HCT116 (cell line): ENCODE measurements at regions of chr1 and their contacts with region 1.

Region 1: DNA sequence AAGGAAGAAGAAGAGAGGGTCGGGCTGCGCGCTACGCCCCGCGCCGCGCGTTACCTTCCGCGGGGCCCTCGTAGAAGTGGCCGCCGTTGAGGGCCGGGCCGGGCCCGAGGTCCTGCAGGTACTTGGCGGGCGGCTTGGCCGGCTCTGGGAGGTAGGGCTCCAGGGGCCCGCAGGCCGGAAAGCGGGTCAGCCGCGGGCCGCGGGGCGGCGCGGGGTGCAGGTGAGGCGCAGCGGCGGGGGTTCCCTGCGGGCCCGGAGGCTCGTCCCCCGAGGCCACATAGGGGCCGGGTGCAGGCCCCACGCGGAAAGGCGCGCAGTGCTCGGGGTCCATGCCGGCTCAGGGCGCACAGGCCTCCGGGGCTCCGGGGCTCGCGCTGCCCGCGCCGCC is 196 bp downstream of the ALX3 start:
- DNase-seq: no peak
- ATAC-seq: no peak
- H3K4me3 ChIP-seq: no peak overlapping the region
- H3K27ac ChIP-seq: no peak overlapping the region
- H3K4me1 ChIP-seq: no peaks in the 10 kb centered on the region
- H3K27me3 ChIP-seq: no peaks in the 10 kb centered on the region
- CTCF ChIP-seq: no peak
- POLR2A ChIP-seq: no peak
- RAD21 ChIP-seq: no peak

Region 2: DNA sequence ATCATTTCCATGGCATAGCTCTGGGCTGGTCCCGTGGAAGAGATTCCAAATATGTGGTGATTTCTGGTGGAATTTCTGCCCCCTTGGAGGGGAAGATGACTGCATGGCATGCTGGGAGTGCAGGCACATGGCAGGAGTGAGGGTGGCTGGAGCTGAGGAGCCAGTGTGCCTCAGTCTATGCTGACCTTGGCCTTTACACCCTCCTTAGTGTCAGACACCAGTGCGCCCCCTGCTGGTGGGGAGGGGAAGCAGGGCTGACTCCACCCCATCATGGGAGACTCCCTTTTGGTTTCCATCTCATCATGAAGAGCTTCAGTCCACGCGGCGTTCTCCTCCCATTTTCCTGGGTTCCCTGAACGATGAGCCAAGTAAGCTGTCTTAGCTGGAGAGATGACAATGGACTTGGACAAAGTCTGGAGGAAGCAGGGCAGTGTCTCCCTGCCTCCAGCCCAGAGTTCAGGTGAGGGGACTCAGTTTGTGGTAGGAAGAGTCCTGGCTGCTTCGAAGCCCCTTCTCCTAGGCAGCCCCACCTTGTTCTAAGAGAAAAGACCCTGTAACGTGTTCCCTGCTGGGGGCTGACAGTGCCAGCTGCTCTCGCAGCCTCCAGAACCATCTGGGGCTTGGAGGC is 10.1 kb before region 1 on chr1:
- CTCF ChIA-PET with region 1: interaction called, 14 read pairs
- POLR2A ChIA-PET with region 1: no interaction called
- RAD21 ChIA-PET with region 1: no interaction called
- intact Hi-C with region 1: no loop called
- DNase-seq: no peak
- ATAC-seq: peak; percentile 93
- H3K4me3 ChIP-seq: no peak overlapping the region
- H3K27ac ChIP-seq: no peak overlapping the region
- H3K4me1 ChIP-seq: no peaks in the 10 kb centered on the region
- H3K27me3 ChIP-seq: no peaks in the 10 kb centered on the region
- CTCF ChIP-seq: peak; percentile 38 to 98 (median 95); a peak in 5 of 6 replicates
- POLR2A ChIP-seq: no peak
- RAD21 ChIP-seq: no peak

Region 3: GRCh38 chr1:110254996-110255787 is 184.9 kb after region 1 on chr1:
- CTCF ChIA-PET with region 1: no interaction called
- POLR2A ChIA-PET with region 1: no interaction called
- RAD21 ChIA-PET with region 1: no interaction called
- intact Hi-C with region 1: no loop called
- DNase-seq: no peak
- ATAC-seq: no peak; the same call in 1 of the 2 replicates
- H3K4me3 ChIP-seq: no peak overlapping the region
- H3K27ac ChIP-seq: no peak overlapping the region
- H3K4me1 ChIP-seq: peaks cover 0 to 8% of the 10 kb centered on the region in 2 experiments; a peak in 2 of 4 replicates
- H3K27me3 ChIP-seq: no peaks in the 10 kb centered on the region
- CTCF ChIP-seq: no peak
- POLR2A ChIP-seq: no peak
- RAD21 ChIP-seq: no peak